Psoas muscle (tissue), 8 donors: ENCODE measurements at regions of chr2 and their contacts with region 1.

Region 1: GRCh38 chr2:25035544-25036220 is 6.2 kb upstream of the EFR3B start:
- DNase-seq: no peak
- ATAC-seq: peak; percentile 67 to 85 (median 78)
- H3K4me3 ChIP-seq: peak overlapping the region; percentile 30
- H3K27ac ChIP-seq: peak overlapping the region; percentile 86
- H3K4me1 ChIP-seq: peaks cover 45% of the 10 kb centered on the region
- H3K27me3 ChIP-seq: no peaks in the 10 kb centered on the region
- CTCF ChIP-seq: no peak

Region 2: DNA sequence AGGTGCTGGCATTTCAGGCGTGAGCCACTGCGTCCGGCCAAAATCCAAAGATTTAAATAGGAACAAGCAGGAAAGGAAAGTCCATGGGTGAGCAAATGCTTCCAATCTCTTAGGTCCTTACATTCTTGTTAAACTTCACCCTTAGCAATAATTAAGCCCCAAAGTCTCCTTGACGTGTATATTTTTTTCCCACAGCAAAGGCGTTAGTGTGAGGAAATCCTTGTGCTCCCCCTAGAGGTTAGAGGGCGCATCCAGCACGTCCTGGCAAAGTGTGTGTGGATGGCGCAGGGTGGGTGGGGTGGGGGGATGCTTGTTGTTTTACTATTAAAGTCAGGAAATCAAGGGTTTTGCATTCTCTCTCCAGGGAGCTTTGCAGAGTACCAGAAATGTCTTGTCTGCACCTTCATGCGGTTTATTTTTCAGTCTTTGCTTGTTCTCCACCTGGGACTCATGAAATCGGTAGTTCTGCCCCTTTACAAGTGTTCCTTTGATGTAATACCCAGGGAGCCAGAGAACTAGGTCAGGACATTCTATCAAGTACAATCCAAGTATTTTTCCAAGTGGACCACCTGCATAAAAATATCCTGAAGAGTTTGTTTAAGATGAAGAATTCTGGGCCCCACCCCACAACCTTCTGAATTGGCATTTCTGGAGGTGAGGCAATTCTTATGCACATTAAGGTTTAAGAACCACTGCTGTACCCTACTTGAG is 653.2 kb before region 1 on chr2:
- intact Hi-C with region 1: no loop called
- DNase-seq: peak; percentile 45 to 67
- ATAC-seq: peak; percentile 81 to 96 (median 91)
- H3K4me3 ChIP-seq: no peak overlapping the region
- H3K27ac ChIP-seq: no peak overlapping the region
- H3K4me1 ChIP-seq: no peaks in the 10 kb centered on the region
- H3K27me3 ChIP-seq: no peaks in the 10 kb centered on the region
- CTCF ChIP-seq: peak; percentile 72

Region 3: GRCh38 chr2:24993406-24994145 is 42.1 kb before region 1 on chr2:
- intact Hi-C with region 1: loop called in 1 of 2 experiments (anchors 5 kb)
- DNase-seq: no peak
- ATAC-seq: peak in 1 of 4 donors; percentile 33
- H3K4me3 ChIP-seq: no peak overlapping the region
- H3K27ac ChIP-seq: no peak overlapping the region
- H3K4me1 ChIP-seq: peaks cover 15% of the 10 kb centered on the region
- H3K27me3 ChIP-seq: no peaks in the 10 kb centered on the region
- CTCF ChIP-seq: no peak

Region 4: DNA sequence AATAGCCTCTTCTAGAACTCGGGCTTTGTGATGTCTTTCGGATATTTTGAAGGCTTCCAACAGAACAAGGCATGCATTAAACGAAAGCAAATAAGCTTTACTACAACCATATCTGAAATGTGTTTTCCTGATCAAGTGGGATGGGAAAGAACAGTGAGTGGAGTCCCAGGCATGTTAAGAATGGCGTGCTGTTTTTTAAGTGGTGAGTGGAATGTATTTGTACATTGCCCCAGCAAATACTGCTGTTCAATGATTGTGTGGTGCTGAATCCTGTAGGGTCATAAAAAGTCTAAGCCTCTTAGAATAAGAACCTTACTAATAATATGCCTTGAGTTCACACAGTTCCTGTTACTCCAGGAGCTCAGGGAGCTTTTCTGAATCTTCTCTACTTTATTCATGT is 80.2 kb after region 1 on chr2:
- intact Hi-C with region 1: no loop called
- DNase-seq: no peak
- ATAC-seq: no peak
- H3K4me3 ChIP-seq: no peak overlapping the region
- H3K27ac ChIP-seq: no peak overlapping the region
- H3K4me1 ChIP-seq: no peaks in the 10 kb centered on the region
- H3K27me3 ChIP-seq: no peaks in the 10 kb centered on the region
- CTCF ChIP-seq: no peak